ENCODE measurements at regions of chr17 and their contacts with region 1.

Region 1: GRCh38 chr17:66834918-66835454 is at the start of gene CACNG5:
- DNase-seq: no peak
- H3K4me3 ChIP-seq: no peak within 1 kb of the TSS
- H3K4me3 Mint-ChIP-seq: peak within 1 kb of the TSS in 1 of 2 donors; percentile 65
- H3K27ac ChIP-seq: no peak within 1 kb of the TSS
- H3K27ac Mint-ChIP-seq: no peak within 1 kb of the TSS
- H3K4me1 ChIP-seq: no peaks in the 10 kb centered on the region
- H3K4me1 Mint-ChIP-seq: peaks cover 2% of the 10 kb centered on the region
- H3K27me3 ChIP-seq: peaks cover 8 to 41% of the 10 kb centered on the region in 2 donors
- H3K27me3 Mint-ChIP-seq: peaks cover 41 to 57% (median 42%) of the 10 kb centered on the region in 3 donors
- CTCF ChIP-seq: no peak
- polyA plus RNA-seq, gene CACNG5: not detected

Region 2: DNA sequence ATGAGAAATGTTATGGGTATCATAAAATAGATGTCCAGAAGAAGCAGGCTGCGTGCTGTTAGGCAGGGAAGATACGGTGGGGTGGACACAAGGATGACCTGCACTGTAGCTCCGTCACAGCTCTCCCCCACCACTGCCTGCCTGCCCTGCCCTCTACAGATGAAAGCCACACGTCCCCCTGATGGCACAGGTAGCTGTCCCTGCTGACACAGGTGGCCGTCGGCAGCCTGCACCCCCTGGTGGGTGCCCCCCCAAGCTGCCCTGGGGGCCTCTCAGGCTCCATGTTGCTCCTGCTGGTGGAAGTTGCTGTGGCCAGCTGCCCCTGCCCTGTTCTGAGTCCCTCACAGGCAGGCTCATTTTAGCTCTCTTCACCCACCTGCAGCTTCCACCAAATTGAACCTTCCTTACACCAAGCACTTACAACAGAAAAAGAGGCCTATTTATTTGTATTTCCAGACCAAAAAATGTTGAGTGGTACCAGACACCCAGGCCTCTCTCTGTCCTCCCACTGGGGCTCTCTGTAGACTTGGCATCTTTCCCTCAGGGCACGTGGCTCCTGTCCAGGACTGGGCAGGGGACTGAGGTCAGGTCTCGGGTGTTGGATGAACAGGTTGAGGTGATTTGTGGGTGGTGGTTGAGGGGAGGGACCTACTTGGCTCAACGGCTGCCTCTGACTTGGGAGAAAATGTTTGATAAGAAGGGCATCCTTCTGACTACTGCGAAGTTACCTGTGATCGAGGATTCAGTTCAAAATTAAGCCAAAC is 50.2 kb before region 1 on chr17:
- intact Hi-C with region 1: loop called in 1 of 2 experiments (anchors 5 kb)
- DNase-seq: no peak
- H3K4me3 ChIP-seq: no peak overlapping the region
- H3K4me3 Mint-ChIP-seq: no peak overlapping the region
- H3K27ac ChIP-seq: no peak overlapping the region
- H3K27ac Mint-ChIP-seq: no peak overlapping the region
- H3K4me1 ChIP-seq: no peaks in the 10 kb centered on the region
- H3K4me1 Mint-ChIP-seq: no peaks in the 10 kb centered on the region
- H3K27me3 ChIP-seq: no peaks in the 10 kb centered on the region
- H3K27me3 Mint-ChIP-seq: peaks cover 0 to 4% (median 2%) of the 10 kb centered on the region in 3 donors
- CTCF ChIP-seq: no peak

Region 3: DNA sequence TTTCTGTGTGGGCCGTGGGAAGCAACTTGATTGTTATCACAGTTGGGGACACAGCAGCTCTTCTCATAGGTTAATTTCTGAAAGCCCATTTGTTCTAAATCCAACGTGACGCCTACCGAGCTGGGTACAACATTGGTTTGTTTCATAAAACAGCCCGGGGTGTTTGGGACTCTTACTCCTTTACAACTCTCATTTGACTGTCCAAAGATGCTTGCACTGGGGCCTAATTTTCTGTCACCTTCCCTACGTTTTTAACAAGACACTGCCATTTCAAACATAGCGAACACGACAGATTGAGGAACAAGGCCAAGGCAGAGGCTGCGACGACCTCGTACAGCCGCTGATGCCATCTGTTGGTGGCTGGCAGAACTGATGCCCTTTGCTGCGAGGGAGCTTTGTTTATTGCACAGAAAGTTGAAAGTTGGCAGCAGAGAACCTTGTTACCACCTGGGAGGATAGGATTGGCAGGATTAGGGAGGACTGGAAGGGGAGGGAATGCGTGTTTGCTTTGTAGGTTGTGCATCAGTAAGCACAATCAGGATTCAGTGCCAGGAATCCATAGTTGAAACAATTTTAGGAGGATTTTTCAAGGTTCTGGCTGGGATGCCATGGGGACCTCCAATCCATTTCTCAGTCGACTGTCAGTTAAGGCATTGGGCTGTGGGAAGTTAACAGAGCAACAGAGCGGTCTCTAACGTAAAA is 640.4 kb after region 1 on chr17:
- intact Hi-C with region 1: no loop called
- DNase-seq: peak; percentile 78 to 87 (median 84)
- H3K4me3 ChIP-seq: peak overlapping the region in 1 of 3 experiments; percentile 37
- H3K4me3 Mint-ChIP-seq: peak overlapping the region; percentile 65 to 81
- H3K27ac ChIP-seq: no peak overlapping the region
- H3K27ac Mint-ChIP-seq: peak overlapping the region in 5 of 7 donors; percentile 17 to 84 (median 72)
- H3K4me1 ChIP-seq: peaks cover 8 to 16% of the 10 kb centered on the region in 2 donors
- H3K4me1 Mint-ChIP-seq: peaks cover 33% of the 10 kb centered on the region
- H3K27me3 ChIP-seq: no peaks in the 10 kb centered on the region
- H3K27me3 Mint-ChIP-seq: peaks cover 0 to 5% (median 4%) of the 10 kb centered on the region in 3 donors
- CTCF ChIP-seq: peak; percentile 89